HCT116 (cell line): ENCODE measurements at regions of chr12 and their contacts with region 1.

Region 1: DNA sequence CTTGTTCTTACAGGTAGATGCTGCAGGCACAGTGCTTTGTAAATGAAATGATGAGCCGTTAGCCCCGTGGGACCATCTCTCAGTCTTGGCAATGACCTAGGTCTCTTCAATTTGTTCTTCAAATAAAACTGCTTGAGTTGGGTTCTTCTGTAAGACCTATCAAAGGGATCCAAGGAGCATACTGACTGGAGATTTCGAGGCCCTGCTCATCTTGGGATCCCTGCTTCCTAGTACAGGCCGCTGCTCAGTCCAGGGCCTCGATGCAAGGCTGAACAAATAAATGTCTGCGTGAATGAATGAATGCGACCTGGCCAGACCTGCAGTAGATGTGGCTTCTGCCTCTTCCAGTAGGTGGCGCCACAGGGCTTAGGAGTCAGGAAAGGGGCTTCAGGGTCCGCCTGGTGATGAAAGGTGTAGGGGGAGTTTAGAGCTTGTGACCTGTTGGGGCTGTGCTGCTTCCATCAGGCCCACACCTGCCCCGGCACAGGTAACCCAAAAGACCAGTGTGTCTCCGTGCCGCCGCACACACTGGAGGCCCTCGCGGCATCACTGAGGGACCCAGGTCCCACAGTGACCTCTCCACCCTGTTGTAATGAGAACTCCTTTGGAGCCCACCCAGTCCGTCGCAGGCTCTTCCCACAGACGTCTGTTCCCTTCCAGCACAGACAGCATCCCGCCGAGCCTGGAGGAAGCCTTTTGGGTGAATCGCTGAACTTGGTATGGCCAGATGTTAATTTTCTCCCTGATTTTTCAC is 4.4 kb downstream of the CACNA1C start:
- DNase-seq: peak; percentile 34
- ATAC-seq: peak; percentile 86
- H3K4me3 ChIP-seq: no peak overlapping the region
- H3K27ac ChIP-seq: no peak overlapping the region
- H3K4me1 ChIP-seq: no peaks in the 10 kb centered on the region
- H3K27me3 ChIP-seq: peaks cover 22% of the 10 kb centered on the region; the same call in 1 of the 2 replicates
- CTCF ChIP-seq: peak; percentile 79 to 96 (median 93)
- POLR2A ChIP-seq: no peak
- RAD21 ChIP-seq: peak; percentile 91

Region 2: GRCh38 chr12:2284857-2285256 is 227.6 kb after region 1 on chr12:
- CTCF ChIA-PET with region 1: interaction called, 6 read pairs
- POLR2A ChIA-PET with region 1: no interaction called
- RAD21 ChIA-PET with region 1: no interaction called
- intact Hi-C with region 1: loop called (anchors 1 kb)
- DNase-seq: peak; percentile 37
- ATAC-seq: peak; percentile 100
- H3K4me3 ChIP-seq: no peak overlapping the region
- H3K27ac ChIP-seq: no peak overlapping the region
- H3K4me1 ChIP-seq: peaks cover 0 to 6% of the 10 kb centered on the region in 2 experiments; a peak in 1 of 4 replicates
- H3K27me3 ChIP-seq: no peaks in the 10 kb centered on the region
- CTCF ChIP-seq: peak; percentile 66 to 83 (median 80)
- POLR2A ChIP-seq: no peak
- RAD21 ChIP-seq: peak; percentile 77